ENCODE measurements at regions of chr20 and their contacts with region 1.

Region 1: GRCh38 chr20:55990003-55990402 is 15.3 kb downstream of the CBLN4 start:
- DNase-seq: no peak
- H3K4me3 ChIP-seq: no peak overlapping the region
- H3K4me3 Mint-ChIP-seq: no peak overlapping the region
- H3K27ac Mint-ChIP-seq: no peak overlapping the region
- H3K4me1 ChIP-seq: no peaks in the 10 kb centered on the region
- H3K4me1 Mint-ChIP-seq: no peaks in the 10 kb centered on the region
- H3K27me3 ChIP-seq: no peaks in the 10 kb centered on the region
- H3K27me3 Mint-ChIP-seq: peaks cover 8% of the 10 kb centered on the region
- CTCF ChIP-seq: no peak

Region 2: DNA sequence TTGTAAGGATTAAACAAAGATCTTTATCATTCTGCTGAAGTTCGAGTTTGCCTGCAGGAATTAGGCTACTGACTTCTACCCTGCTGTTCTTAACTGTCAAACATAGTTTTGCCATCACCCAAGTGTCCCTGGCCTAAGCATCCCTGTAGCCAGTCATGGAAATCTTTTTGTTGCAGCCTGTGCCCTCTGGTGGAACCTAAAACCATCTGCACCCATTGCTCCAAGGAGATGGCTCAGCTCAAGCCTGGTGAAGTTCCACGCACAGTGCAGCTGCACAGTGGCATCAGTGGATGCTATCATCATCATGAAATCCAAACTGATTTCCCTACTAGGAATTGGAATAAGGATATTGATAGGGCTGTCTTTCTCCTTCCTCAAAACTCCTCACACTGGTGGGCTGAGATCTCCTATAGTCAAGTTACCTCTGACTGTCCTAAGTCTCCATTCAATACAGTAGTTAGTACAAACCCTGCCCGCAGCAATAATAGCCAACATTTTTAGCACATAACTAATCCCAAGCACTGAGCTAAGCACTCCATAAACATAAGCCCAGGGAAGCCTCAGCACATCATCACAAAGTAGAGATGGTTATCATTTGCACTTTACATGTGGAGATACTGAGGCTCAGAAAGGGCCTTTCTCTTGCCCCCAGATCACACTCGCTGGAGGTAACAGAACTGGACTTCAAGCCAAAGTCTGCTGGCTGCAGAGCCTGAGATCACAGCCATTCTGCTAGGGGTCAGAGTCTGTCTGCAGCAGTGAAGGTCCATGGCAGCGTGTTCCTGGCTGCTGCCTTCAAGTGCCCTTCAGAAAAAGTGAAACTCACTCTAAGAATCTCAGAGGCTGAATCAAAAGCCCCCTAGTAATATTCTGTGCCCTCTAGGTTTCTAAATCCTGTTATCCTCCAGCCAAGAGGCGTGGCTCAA is 181.3 kb after region 1 on chr20:
- CTCF ChIA-PET with region 1: no interaction called
- POLR2A ChIA-PET with region 1: no interaction called
- intact Hi-C with region 1: loop called (anchors 10 kb)
- DNase-seq: peak in 1 of 2 experiments; percentile 24
- H3K4me3 ChIP-seq: no peak overlapping the region
- H3K4me3 Mint-ChIP-seq: no peak overlapping the region
- H3K27ac Mint-ChIP-seq: no peak overlapping the region
- H3K4me1 ChIP-seq: no peaks in the 10 kb centered on the region
- H3K4me1 Mint-ChIP-seq: no peaks in the 10 kb centered on the region
- H3K27me3 ChIP-seq: 0 out of 2 replicates have a peak, but pooled peaks cover 2% of the 10 kb centered on the region
- H3K27me3 Mint-ChIP-seq: peaks cover 10% of the 10 kb centered on the region
- CTCF ChIP-seq: peak; percentile 47 to 58